CD4-positive, alpha-beta memory T cell (primary cell): ENCODE measurements at regions of chr17 and their contacts with region 1.

Region 1: GRCh38 chr17:74742153-74742515 is 5.1 kb downstream of the RAB37 start:
- DNase-seq: peak in 4 of 5 donors; percentile 46 to 58 (median 57)
- H3K4me3 ChIP-seq: peak overlapping the region; percentile 20 to 30
- H3K4me3 Mint-ChIP-seq: peak overlapping the region; percentile 72 to 91 (median 79)
- H3K27ac ChIP-seq: peak overlapping the region; percentile 49
- H3K27ac Mint-ChIP-seq: peak overlapping the region in 6 of 7 donors; percentile 88 to 96 (median 90)
- H3K4me1 ChIP-seq: peaks cover 95% of the 10 kb centered on the region
- H3K4me1 Mint-ChIP-seq: peaks cover 54 to 95% (median 75%) of the 10 kb centered on the region in 4 donors
- H3K27me3 ChIP-seq: no peaks in the 10 kb centered on the region
- H3K27me3 Mint-ChIP-seq: no peaks in the 10 kb centered on the region

Region 2: DNA sequence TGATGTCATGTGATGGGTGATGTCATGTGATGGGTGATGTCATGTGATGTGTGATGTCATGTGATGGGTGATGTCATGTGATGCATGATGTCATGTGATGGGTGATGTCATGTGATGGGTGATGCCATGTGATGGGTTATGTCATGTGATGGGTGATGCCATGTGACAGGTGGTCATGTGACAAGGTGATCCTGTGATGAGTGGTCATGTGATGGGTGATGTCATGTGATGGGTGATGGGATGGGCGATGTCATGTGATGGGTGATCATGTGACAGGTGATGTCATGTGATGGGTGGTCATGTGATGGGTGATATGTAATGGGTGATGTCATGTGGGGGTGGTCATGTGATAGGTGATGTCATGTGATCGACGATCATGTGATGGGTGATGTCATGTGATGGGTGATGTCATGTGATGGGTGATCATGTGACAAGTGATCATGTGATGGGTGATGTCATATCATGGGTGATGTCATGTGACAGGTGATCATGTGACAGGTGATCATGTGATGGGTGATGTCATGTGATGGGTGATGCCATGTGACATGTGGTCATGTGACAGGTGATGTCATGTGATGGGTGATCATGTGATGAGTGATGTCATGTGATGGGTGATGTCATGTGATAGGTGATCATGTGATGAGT is 228.0 kb before region 1 on chr17:
- CTCF ChIA-PET with region 1: no interaction called
- POLR2A ChIA-PET with region 1: no interaction called
- intact Hi-C with region 1: no loop called
- DNase-seq: peak; percentile 34 to 80 (median 46)
- H3K4me3 ChIP-seq: no peak overlapping the region
- H3K4me3 Mint-ChIP-seq: peak overlapping the region in 6 of 8 donors; percentile 1 to 81 (median 66)
- H3K27ac ChIP-seq: no peak overlapping the region
- H3K27ac Mint-ChIP-seq: peak overlapping the region; percentile 38 to 99 (median 92)
- H3K4me1 ChIP-seq: no peaks in the 10 kb centered on the region
- H3K4me1 Mint-ChIP-seq: peaks cover 0 to 13% (median 2%) of the 10 kb centered on the region in 4 donors
- H3K27me3 ChIP-seq: no peaks in the 10 kb centered on the region
- H3K27me3 Mint-ChIP-seq: peaks cover 11 to 21% of the 10 kb centered on the region in 2 donors

Region 3: GRCh38 chr17:74776044-74776977 is 34.2 kb after region 1 on chr17 and contains the start of gene NAT9:
- CTCF ChIA-PET with region 1: interaction called, 144 read pairs
- POLR2A ChIA-PET with region 1: interaction called, 489 read pairs
- intact Hi-C with region 1: loop called (anchors 1 kb)
- DNase-seq: peak; percentile 95 to 99 (median 97)
- H3K4me3 ChIP-seq: peak within 1 kb of the TSS; percentile 64 to 89
- H3K4me3 Mint-ChIP-seq: peak within 1 kb of the TSS; percentile 95 to 100 (median 99)
- H3K27ac ChIP-seq: peak within 1 kb of the TSS; percentile 77
- H3K27ac Mint-ChIP-seq: peak within 1 kb of the TSS; percentile 93 to 99 (median 97)
- H3K4me1 ChIP-seq: peaks cover 65% of the 10 kb centered on the region
- H3K4me1 Mint-ChIP-seq: peaks cover 45 to 83% (median 61%) of the 10 kb centered on the region in 4 donors
- H3K27me3 ChIP-seq: no peaks in the 10 kb centered on the region
- H3K27me3 Mint-ChIP-seq: no peaks in the 10 kb centered on the region
- total RNA-seq, gene NAT9: 60.0 to 70.3 TPM